WTC11 (cell line): ENCODE measurements at regions of chr18 and their contacts with region 1.

Region 1: DNA sequence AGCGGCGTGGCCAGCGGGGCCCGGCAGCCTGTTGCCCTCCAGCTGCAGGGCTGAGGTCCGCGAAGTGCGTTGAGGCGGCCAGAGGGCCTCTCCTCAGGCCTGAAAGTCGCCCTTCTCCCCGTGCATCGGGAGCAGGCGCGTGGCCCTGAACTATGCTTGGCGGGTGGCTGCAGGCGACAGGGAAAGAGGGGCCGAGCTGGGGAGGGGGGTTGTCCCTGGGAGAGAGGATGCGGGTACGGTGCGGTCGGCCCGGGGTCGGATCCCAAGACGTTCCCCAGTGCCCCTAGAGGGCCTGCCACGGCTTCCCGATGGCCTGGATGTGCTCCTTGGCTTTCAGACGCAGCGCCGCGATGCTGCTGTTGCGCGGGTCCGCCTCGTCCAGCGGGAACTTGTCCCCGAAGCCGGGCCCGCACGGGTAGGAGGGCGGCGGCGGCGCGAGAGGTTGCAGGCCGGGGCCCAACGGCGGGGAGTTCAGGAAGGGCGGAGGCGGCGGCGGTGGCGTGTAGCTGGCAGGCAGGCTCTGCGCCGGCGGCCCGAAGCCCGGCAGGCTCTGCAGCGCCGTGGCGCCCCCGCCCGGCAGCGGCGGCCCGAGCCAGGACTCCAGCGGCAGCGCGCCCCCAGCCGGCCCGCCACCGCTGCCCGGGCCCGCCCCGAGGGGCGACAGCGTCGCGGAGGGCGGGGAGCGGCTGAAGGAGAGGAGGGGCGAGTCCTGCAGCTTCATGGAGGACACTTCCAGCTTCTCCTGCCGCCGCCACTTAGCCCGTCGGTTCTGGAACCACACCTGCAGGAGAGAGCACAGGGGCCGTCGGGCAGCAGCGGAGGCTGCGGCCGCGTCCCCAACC is 4.3 kb downstream of the RAX start:
- DNase-seq: peak; percentile 84
- ATAC-seq: peak; percentile 48
- H3K4me3 Mint-ChIP-seq: peak overlapping the region; percentile 76
- H3K27ac Mint-ChIP-seq: no peak overlapping the region
- H3K4me1 Mint-ChIP-seq: peaks cover 57% of the 10 kb centered on the region
- H3K27me3 Mint-ChIP-seq: peaks cover 97% of the 10 kb centered on the region
- CTCF ChIP-seq: no peak

Region 2: GRCh38 chr18:59220784-59221765 is 47.9 kb before region 1 on chr18:
- CTCF ChIA-PET with region 1: interaction called, 31 read pairs
- POLR2A ChIA-PET with region 1: no interaction called
- DNase-seq: peak; percentile 41
- ATAC-seq: peak; percentile 41
- H3K4me3 Mint-ChIP-seq: peak overlapping the region; percentile 79
- H3K27ac Mint-ChIP-seq: no peak overlapping the region
- H3K4me1 Mint-ChIP-seq: peaks cover 19% of the 10 kb centered on the region
- H3K27me3 Mint-ChIP-seq: peaks cover 100% of the 10 kb centered on the region
- CTCF ChIP-seq: no peak

Region 3: GRCh38 chr18:59249205-59249774 is 19.7 kb before region 1 on chr18:
- CTCF ChIA-PET with region 1: interaction called, 45 read pairs
- POLR2A ChIA-PET with region 1: no interaction called
- DNase-seq: peak; percentile 62
- ATAC-seq: peak; percentile 91
- H3K4me3 Mint-ChIP-seq: no peak overlapping the region
- H3K27ac Mint-ChIP-seq: no peak overlapping the region
- H3K4me1 Mint-ChIP-seq: no peaks in the 10 kb centered on the region; the same call in 1 of the 2 replicates
- H3K27me3 Mint-ChIP-seq: peaks cover 83% of the 10 kb centered on the region
- CTCF ChIP-seq: peak; percentile 62; the same call in 1 of the 2 replicates

Region 4: GRCh38 chr18:59308248-59308937 is 39.5 kb after region 1 on chr18:
- CTCF ChIA-PET with region 1: interaction called, 22 read pairs
- POLR2A ChIA-PET with region 1: interaction called, 12 read pairs
- DNase-seq: peak; percentile 81
- ATAC-seq: peak; percentile 91
- H3K4me3 Mint-ChIP-seq: peak overlapping the region; percentile 48
- H3K27ac Mint-ChIP-seq: no peak overlapping the region
- H3K4me1 Mint-ChIP-seq: no peaks in the 10 kb centered on the region
- H3K27me3 Mint-ChIP-seq: peaks cover 67% of the 10 kb centered on the region
- CTCF ChIP-seq: peak; percentile 20; the same call in 1 of the 2 replicates